ENCODE measurements at regions of chr2 and their contacts with region 1.

Region 1: GRCh38 chr2:105224444-105224843 is 17.1 kb upstream of the GPR45 start:
- DNase-seq: no peak
- H3K4me3 ChIP-seq: no peak overlapping the region
- H3K27ac ChIP-seq: no peak overlapping the region
- H3K4me1 ChIP-seq: no peaks in the 10 kb centered on the region
- H3K27me3 ChIP-seq: no peaks in the 10 kb centered on the region
- CTCF ChIP-seq: no peak

Region 2: GRCh38 chr2:105196414-105197041 is 27.9 kb before region 1 on chr2:
- intact Hi-C with region 1: loop called (anchors 2 kb)
- DNase-seq: no peak
- H3K4me3 ChIP-seq: no peak overlapping the region
- H3K27ac ChIP-seq: no peak overlapping the region
- H3K4me1 ChIP-seq: no peaks in the 10 kb centered on the region
- H3K27me3 ChIP-seq: no peaks in the 10 kb centered on the region
- CTCF ChIP-seq: no peak